HepG2 (cell line): ENCODE measurements at regions of chr1 and their contacts with region 1.

Region 1: DNA sequence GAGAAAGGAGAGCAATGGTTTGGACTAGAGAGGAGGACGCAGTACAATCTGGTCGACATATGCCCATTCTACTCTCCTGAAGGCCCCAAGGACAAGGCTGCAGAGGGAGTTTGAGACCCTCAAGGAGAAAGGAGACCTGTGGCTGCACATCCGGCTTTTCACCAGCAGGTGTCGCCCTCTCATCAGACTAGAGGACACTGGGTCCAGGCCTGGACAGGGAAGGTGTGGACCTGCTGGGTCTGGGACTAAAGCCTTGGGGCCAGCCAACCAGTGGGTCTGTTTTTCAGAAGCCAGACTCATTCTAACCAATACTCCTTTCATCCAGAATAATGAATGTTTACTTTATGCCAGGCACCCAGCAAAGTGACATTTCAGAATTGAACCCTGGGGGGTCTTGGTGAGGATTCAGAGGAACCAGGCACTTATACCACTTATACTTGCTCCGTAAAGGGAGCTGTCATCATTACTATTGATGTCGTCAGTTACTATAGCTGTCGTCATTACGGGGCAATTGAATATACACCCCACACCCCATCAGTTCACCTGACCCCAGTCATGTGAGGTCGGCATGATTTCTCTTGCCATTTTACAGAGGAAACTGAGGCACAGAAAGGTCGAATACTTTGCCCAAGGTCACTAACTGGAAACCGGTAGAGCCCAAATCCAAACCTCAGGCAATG is 5.1 kb downstream of the SRARP start:
- DNase-seq: peak; percentile 63
- ATAC-seq: peak; percentile 59
- H3K4me3 ChIP-seq: no peak overlapping the region
- H3K27ac ChIP-seq: no peak overlapping the region
- H3K4me1 ChIP-seq: peaks cover 67% of the 10 kb centered on the region
- H3K27me3 ChIP-seq: peaks cover 0 to 8% of the 10 kb centered on the region in 2 experiments; a peak in 1 of 5 replicates
- CTCF ChIP-seq: peak; percentile 97
- EP300 ChIP-seq: no peak
- POLR2A ChIP-seq: no peak
- RAD21 ChIP-seq: peak; percentile 88

Region 2: GRCh38 chr1:15825800-15826199 is 183.4 kb before region 1 on chr1:
- CTCF ChIA-PET with region 1: no interaction called
- POLR2A ChIA-PET with region 1: no interaction called
- in situ Hi-C with region 1: no loop called
- intact Hi-C with region 1: no loop called
- DNase-seq: no peak
- ATAC-seq: no peak
- H3K4me3 ChIP-seq: no peak overlapping the region
- H3K27ac ChIP-seq: no peak overlapping the region
- H3K4me1 ChIP-seq: peaks cover 42% of the 10 kb centered on the region
- H3K27me3 ChIP-seq: no peaks in the 10 kb centered on the region
- CTCF ChIP-seq: no peak
- EP300 ChIP-seq: no peak
- POLR2A ChIP-seq: no peak
- RAD21 ChIP-seq: no peak

Region 3: GRCh38 chr1:15916417-15916816 is 92.8 kb before region 1 on chr1:
- CTCF ChIA-PET with region 1: no interaction called
- POLR2A ChIA-PET with region 1: no interaction called
- in situ Hi-C with region 1: no loop called
- intact Hi-C with region 1: no loop called
- DNase-seq: no peak
- ATAC-seq: no peak
- H3K4me3 ChIP-seq: no peak overlapping the region
- H3K27ac ChIP-seq: no peak overlapping the region
- H3K4me1 ChIP-seq: no peaks in the 10 kb centered on the region
- H3K27me3 ChIP-seq: no peaks in the 10 kb centered on the region
- CTCF ChIP-seq: no peak
- EP300 ChIP-seq: no peak
- POLR2A ChIP-seq: no peak
- RAD21 ChIP-seq: no peak

Region 4: DNA sequence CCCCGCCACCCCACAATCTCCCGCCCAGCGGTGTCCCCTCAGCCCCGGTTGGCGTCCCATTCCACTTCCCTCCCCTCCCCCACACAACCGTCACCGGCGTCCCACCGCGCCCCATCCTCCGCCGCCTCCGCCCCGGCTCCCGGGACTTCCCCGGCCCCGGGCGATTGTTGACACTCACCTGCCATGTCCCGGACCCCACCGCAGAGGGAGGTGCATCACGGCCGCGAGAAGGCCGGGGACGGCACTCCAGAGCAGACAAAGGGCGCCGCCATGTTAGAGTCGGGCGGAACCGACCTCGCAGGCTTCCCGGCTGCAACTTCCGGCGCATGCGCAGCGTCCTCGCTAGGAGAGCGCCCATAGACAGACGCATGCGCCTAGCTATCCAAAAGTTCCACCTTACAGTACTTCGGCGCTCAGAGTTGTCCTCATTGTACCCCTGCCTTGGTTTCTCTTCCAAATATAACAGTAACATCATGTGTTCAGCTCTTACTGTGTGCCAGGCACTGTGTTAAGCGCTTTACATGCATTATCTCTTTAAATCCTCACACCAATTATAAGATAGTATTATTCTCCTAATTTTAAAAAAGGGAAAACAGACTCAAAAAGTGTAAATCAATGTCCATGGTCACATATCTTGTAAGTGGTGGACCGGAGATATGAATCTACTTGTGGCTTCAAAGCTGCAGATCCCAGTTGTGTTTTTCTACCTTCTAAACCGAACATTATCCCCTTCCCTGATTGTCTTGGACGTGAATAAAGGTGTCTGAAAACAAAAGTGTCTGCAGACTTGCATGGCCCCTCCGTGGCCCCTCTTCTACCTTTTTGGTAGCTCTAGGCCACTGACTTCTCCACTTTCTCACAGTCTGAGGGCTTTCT is 33.1 kb before region 1 on chr1 and contains the start of gene ZBTB17:
- CTCF ChIA-PET with region 1: no interaction called
- POLR2A ChIA-PET with region 1: interaction called, 10 read pairs
- in situ Hi-C with region 1: no loop called
- intact Hi-C with region 1: no loop called
- DNase-seq: peak; percentile 85
- ATAC-seq: peak; percentile 93
- H3K4me3 ChIP-seq: peak within 1 kb of the TSS; percentile 87 to 97 (median 94)
- H3K27ac ChIP-seq: peak within 1 kb of the TSS; percentile 71
- H3K4me1 ChIP-seq: peaks cover 38% of the 10 kb centered on the region
- H3K27me3 ChIP-seq: no peaks in the 10 kb centered on the region
- CTCF ChIP-seq: 0 out of 2 replicates have a peak, but pooled peaks have one; percentile 12
- EP300 ChIP-seq: no peak
- POLR2A ChIP-seq: peak; percentile 73
- RAD21 ChIP-seq: no peak
- total RNA-seq, gene ZBTB17: 10.1 and 16.7 TPM in 2 replicates

Region 5: GRCh38 chr1:16032388-16033103 is 23.4 kb after region 1 on chr1:
- CTCF ChIA-PET with region 1: interaction called, 16 read pairs
- POLR2A ChIA-PET with region 1: no interaction called
- in situ Hi-C with region 1: no loop called
- intact Hi-C with region 1: loop called (anchors 2 kb)
- DNase-seq: peak; percentile 82
- ATAC-seq: peak; percentile 86
- H3K4me3 ChIP-seq: no peak overlapping the region
- H3K27ac ChIP-seq: no peak overlapping the region
- H3K4me1 ChIP-seq: peaks cover 11% of the 10 kb centered on the region
- H3K27me3 ChIP-seq: peaks cover 9 to 27% of the 10 kb centered on the region in 2 experiments; a peak in 4 of 5 replicates
- CTCF ChIP-seq: peak; percentile 98
- EP300 ChIP-seq: no peak
- POLR2A ChIP-seq: no peak
- RAD21 ChIP-seq: peak; percentile 91

Region 6: DNA sequence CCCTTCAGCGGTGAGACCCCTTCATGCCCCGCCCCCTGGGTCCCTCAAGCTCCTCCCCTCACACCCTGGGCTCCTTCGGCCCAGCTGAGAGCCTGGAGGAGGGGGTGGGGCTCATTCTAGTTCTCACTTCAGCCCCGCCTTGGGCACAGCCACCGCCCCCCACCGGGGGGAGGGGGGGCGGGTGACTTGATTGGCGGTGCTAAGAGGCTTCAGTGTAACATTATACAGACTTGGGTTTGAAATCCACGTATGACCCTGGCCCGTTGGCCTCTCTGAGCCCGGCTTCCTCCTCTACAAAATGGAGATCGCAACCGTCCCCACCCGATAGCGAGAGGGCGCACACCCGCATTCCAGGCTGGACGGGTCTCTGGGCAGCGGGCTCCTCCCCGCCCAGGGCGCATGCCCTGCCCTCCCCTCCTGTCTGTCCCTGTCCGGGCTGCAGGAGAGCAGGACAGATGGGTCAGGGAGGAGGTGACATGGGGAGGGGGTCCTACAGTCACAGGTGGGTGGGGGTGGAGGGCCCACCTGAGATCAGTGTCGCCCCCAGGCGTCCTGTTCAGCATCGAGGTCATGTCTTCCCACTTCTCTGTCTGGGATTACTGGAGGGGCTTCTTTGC is 39.5 kb after region 1 on chr1:
- CTCF ChIA-PET with region 1: interaction called, 3 read pairs
- POLR2A ChIA-PET with region 1: no interaction called
- in situ Hi-C with region 1: loop called (anchors 5 kb)
- intact Hi-C with region 1: no loop called
- DNase-seq: no peak
- ATAC-seq: no peak
- H3K4me3 ChIP-seq: no peak overlapping the region
- H3K27ac ChIP-seq: no peak overlapping the region
- H3K4me1 ChIP-seq: peaks cover 9% of the 10 kb centered on the region
- H3K27me3 ChIP-seq: peaks cover 7 to 36% of the 10 kb centered on the region in 2 experiments; a peak in 4 of 5 replicates
- CTCF ChIP-seq: no peak
- EP300 ChIP-seq: no peak
- POLR2A ChIP-seq: no peak
- RAD21 ChIP-seq: no peak

Region 7: DNA sequence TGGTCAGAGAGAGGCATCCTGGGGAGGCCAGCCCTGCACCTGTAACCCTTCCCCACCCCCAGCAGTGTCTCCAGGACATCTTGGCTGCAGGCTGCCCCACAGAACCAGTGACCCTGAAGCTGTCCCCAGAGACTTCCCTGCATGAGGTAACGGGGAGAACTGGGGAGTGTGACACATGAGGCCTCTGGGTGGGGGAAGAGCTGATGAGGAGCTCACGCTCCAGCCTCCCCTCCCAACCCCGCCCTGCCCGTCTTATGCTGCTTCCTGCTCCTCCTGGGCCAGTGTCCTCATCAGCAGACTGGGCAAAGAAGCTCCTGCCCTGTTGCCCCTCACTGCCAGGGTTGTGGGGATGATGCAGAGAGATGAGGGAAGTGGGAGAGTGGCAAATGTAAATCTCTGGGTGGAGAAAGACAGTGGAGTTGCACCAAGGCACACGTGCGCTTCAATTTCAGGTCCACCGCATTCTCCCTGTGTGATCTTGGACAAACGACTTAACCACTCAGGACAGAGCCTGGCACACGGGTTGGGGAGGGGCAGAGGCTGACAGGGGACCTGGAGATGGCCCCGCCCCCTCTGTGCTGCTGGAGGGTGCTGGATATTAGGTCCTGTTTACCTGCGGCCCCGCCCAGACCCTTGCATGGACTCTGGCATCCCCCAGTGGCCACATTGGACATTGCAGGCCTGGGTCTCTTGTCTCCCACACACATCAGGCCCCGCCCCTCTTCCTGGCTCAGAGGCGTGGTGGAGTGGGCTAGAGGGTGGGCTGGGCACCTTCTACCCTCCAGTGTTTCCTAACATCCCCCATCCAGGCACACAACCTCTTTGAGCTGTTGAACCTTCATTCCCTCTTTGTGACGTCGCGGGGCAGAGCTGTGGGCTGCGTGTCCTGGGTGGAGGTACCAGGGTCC is 46.7 kb after region 1 on chr1:
- CTCF ChIA-PET with region 1: interaction called, 35 read pairs
- POLR2A ChIA-PET with region 1: no interaction called
- in situ Hi-C with region 1: no loop called
- intact Hi-C with region 1: loop called (anchors 1 kb)
- DNase-seq: peak; percentile 77
- ATAC-seq: peak; percentile 84
- H3K4me3 ChIP-seq: peak overlapping the region in 1 of 3 experiments; percentile 23; a peak in 1 of 6 replicates
- H3K27ac ChIP-seq: no peak overlapping the region
- H3K4me1 ChIP-seq: peaks cover 19% of the 10 kb centered on the region
- H3K27me3 ChIP-seq: peaks cover 5 to 28% of the 10 kb centered on the region in 2 experiments; a peak in 3 of 5 replicates
- CTCF ChIP-seq: peak; percentile 85
- EP300 ChIP-seq: no peak
- POLR2A ChIP-seq: no peak
- RAD21 ChIP-seq: peak; percentile 80